Calu3 (cell line): ENCODE measurements at regions of chr10 and their contacts with region 1.

Region 1: DNA sequence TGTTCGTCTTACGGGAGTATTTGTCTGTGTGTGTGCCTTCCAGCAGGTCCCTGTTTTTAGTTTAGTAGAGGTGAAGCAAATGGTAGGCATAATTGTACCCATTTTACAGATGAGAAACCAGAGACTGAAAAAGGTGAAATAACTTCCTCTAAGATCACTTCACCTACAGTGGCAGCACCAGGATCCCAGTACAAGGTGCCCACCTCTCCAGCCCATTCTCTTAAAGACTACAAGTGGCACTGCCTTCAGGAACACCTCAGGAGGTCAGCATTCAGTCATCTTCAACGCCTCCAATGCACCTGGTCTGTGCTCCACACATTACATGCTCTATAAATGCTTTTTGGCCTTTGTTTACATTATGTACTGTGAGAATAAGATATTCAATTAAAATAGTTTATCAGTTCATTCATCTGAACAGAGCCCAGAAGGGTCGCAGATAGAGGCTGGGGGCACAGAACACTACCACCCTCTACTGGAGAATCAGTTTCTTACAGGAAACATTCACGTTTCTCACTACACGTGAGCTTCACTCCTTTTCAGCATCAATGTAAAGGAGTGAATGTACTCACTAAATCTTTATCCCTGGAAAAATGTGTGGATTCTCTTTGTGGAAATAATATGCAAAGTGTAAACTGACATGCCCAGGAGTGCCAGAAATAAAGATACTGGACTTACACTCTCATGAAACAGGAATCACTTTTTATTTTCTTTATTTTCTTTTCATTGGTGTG is 45.5 kb upstream of the ABLIM1 start:
- DNase-seq: no peak
- H3K4me3 Mint-ChIP-seq: no peak overlapping the region
- H3K27ac Mint-ChIP-seq: no peak overlapping the region
- H3K4me1 Mint-ChIP-seq: peaks cover 6% of the 10 kb centered on the region
- H3K27me3 Mint-ChIP-seq: no peaks in the 10 kb centered on the region
- CTCF ChIP-seq: peak; percentile 55

Region 2: DNA sequence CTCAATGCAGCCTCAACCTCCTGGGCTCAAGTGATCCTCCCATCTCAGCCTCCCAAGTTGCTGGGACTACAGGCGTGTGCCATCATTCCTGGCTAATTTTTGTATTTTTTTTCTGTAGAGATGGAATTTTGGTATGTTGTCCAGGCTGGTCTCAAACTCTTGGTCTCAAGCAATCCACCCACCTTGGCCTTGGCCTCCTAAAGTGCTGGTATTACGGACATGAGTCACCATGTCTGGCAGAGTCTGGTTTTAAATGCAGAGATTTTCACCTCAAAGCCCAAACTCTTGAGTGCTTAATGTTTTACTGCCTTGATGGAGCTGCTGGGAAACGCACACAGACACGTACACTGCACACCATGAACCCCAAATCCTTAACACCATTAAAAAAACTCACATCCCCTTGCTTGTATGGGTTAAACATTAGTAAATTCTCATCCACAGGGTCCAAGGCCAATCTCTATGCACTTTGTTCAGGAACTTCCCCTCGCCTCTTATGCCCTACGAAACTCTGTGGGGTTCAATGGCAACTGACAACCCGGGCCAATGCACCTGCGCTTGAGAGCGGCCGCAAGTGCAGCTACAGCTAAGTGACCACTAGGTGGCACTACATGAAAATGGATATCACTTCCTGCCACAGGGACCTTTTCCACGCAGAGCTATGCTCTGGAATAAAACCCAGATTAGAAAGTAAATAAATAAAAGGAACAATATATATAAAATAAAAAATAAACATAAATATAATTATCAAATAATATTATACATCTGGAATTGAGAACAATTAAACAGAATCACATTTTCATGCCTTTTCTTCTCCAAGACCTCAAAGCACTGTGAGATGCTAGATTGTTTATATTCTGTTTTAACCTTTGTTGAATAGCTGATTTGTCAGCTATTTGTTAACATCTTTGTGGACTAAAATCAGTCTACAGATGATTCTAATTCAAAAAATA is 232.3 kb before region 1 on chr10:
- CTCF ChIA-PET with region 1: no interaction called
- intact Hi-C with region 1: loop called (anchors 2 kb)
- DNase-seq: peak; percentile 52
- H3K4me3 Mint-ChIP-seq: no peak overlapping the region
- H3K27ac Mint-ChIP-seq: peak overlapping the region; percentile 71
- H3K4me1 Mint-ChIP-seq: peaks cover 15% of the 10 kb centered on the region
- H3K27me3 Mint-ChIP-seq: no peaks in the 10 kb centered on the region
- CTCF ChIP-seq: peak; percentile 48

Region 3: GRCh38 chr10:114550756-114551635 is 152.5 kb before region 1 on chr10:
- CTCF ChIA-PET with region 1: interaction called, 4 read pairs
- intact Hi-C with region 1: loop called (anchors 1 kb)
- DNase-seq: no peak
- H3K4me3 Mint-ChIP-seq: no peak overlapping the region
- H3K27ac Mint-ChIP-seq: no peak overlapping the region
- H3K4me1 Mint-ChIP-seq: peaks cover 18% of the 10 kb centered on the region
- H3K27me3 Mint-ChIP-seq: no peaks in the 10 kb centered on the region
- CTCF ChIP-seq: no peak